Endothelial cell of umbilical vein (primary cell): ENCODE measurements at regions of chr6 and their contacts with region 1.

Region 1: GRCh38 chr6:166664135-166664534 is 37.1 kb upstream of the RPS6KA2 start:
- DNase-seq: peak; percentile 59
- H3K4me3 ChIP-seq: no peak overlapping the region
- H3K27ac ChIP-seq: no peak overlapping the region
- H3K4me1 ChIP-seq: no peaks in the 10 kb centered on the region
- H3K27me3 ChIP-seq: no peaks in the 10 kb centered on the region
- CTCF ChIP-seq: no peak
- POLR2A ChIP-seq: no peak

Region 2: GRCh38 chr6:166650824-166651807 is 13.0 kb before region 1 on chr6:
- CTCF ChIA-PET with region 1: interaction called, 4 read pairs
- POLR2A ChIA-PET with region 1: no interaction called
- dilution Hi-C with region 1: no loop called
- intact Hi-C with region 1: loop called (anchors 2 kb)
- DNase-seq: no peak
- H3K4me3 ChIP-seq: no peak overlapping the region
- H3K27ac ChIP-seq: no peak overlapping the region
- H3K4me1 ChIP-seq: no peaks in the 10 kb centered on the region
- H3K27me3 ChIP-seq: peaks cover 1 to 7% of the 10 kb centered on the region in 2 experiments
- CTCF ChIP-seq: no peak
- POLR2A ChIP-seq: no peak

Region 3: GRCh38 chr6:166862287-166862977 is 198.3 kb after region 1 on chr6:
- CTCF ChIA-PET with region 1: no interaction called
- POLR2A ChIA-PET with region 1: no interaction called
- dilution Hi-C with region 1: no loop called
- intact Hi-C with region 1: no loop called
- DNase-seq: no peak
- H3K4me3 ChIP-seq: peak overlapping the region in 1 of 3 experiments; percentile 34
- H3K27ac ChIP-seq: no peak overlapping the region
- H3K4me1 ChIP-seq: no peaks in the 10 kb centered on the region
- H3K27me3 ChIP-seq: peaks cover 29 to 41% of the 10 kb centered on the region in 2 experiments
- CTCF ChIP-seq: no peak
- POLR2A ChIP-seq: no peak